ENCODE measurements at regions of chr14 and their contacts with region 1.

Region 1: DNA sequence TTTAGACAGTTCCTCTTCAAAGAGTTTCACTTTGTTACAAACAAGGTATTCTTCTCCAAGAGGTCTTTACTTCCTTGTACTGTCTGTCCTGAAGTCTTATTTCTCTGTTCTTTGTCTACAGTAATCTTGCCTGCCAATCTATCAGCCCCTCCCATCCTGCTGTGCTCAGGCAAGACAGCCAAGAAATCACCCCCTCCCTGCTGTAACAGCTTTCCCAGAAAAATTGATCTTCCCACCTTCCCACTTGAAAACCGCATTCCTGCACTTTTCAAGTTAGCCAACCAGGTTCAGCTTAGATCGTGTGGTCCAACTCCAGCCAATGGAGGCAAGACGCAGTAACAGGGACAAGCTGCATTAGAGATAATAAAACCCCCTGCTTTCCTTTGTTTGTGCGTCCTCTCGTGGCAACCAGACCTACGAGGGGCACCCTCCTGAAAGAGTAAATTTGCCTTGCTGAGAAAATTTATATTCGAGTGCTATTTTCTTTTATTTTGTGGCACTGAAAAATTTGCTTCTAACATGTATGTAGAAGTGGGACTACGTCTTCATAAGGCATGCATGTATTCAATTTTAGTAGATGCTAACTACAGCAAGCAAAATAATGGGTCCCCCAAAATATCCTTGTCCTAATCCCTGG is 46.5 kb upstream of the ESR2 start:
- DNase-seq: no peak
- H3K4me3 ChIP-seq: no peak overlapping the region
- H3K27ac ChIP-seq: no peak overlapping the region
- H3K4me1 ChIP-seq: no peaks in the 10 kb centered on the region
- H3K27me3 ChIP-seq: no peaks in the 10 kb centered on the region
- CTCF ChIP-seq: no peak
- EP300 ChIP-seq: no peak
- POLR2A ChIP-seq: no peak

Region 2: GRCh38 chr14:64478634-64479250 is 138.1 kb after region 1 on chr14:
- intact Hi-C with region 1: loop called in 2 of 4 experiments (anchors 10 kb)
- DNase-seq: no peak
- H3K4me3 ChIP-seq: no peak overlapping the region
- H3K27ac ChIP-seq: no peak overlapping the region
- H3K4me1 ChIP-seq: no peaks in the 10 kb centered on the region
- H3K27me3 ChIP-seq: no peaks in the 10 kb centered on the region
- CTCF ChIP-seq: peak in 1 of 3 donors; percentile 33
- EP300 ChIP-seq: no peak
- POLR2A ChIP-seq: no peak

Region 3: DNA sequence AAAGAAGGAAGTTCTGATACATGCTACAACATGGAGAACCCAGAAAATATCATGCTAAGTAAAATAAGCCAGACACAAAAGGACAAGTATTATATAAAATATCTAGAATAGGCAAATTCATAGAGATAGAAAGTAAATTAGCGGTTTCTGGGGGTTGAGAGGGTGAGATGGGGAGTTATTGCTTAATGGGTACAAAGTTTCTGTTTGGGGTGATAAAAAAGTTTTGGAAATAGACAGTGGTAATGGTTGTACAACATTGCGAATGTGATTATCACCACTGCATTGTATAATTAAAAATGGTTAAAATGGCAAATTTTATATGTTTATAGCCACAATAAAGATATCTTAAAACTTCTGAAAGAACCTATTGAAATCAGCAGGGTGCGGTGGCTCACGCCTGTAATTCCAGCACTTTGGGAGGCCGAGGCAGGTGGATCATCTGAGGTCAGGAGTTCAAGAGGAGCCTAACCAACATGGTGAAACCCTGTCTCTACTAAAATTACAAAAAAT is 148.0 kb after region 1 on chr14:
- intact Hi-C with region 1: loop called in 1 of 4 experiments (anchors 10 kb)
- DNase-seq: no peak
- H3K4me3 ChIP-seq: no peak overlapping the region
- H3K27ac ChIP-seq: no peak overlapping the region
- H3K4me1 ChIP-seq: no peaks in the 10 kb centered on the region
- H3K27me3 ChIP-seq: no peaks in the 10 kb centered on the region
- CTCF ChIP-seq: no peak
- EP300 ChIP-seq: no peak
- POLR2A ChIP-seq: no peak

Region 4: DNA sequence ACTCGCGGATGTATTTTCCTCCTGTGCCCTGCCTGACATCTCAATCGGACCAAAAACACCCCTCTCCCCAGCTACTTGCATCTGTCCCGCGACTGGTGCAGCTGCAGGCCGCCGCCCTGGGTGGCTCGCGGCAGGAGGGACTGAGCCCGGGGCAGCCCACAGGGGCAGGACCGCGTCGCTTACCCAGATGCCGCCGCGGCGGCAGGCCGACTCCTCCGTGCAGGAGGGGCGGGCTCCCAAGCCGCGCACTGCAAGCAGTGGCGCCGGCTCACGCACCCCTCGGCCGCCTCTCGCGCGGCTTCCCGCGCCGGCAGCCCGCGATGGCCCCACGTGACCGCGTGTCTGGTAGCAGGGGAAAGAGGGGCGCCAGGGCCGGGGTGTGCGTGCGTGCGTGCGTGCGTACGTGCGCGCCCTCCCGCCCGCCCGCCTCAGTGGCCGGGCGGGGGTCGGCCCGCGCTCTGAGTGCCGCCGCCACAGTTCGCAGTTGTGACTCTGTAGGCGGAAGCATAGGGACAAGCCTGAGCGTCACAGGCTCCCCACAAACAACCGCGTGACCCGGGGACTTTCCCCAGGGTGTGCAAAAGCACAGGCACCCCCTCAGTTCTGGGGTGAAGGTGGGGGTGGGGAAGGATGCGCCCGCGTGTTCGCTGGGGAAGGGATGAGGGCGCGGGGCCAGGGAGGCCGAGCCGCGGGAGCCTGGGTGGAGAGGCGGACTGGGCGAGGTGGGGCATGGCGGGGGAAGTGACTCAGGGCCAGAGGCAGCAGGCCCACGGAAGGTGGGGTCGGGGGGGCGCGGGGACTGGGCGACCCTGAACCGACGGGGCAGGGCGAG is 163.0 kb after region 1 on chr14 and contains the start of gene ZBTB25:
- intact Hi-C with region 1: loop called in 1 of 4 experiments (anchors 10 kb)
- DNase-seq: peak; percentile 88 to 94 (median 91)
- H3K4me3 ChIP-seq: peak within 1 kb of the TSS; percentile 89
- H3K27ac ChIP-seq: peak within 1 kb of the TSS; percentile 95 to 99
- H3K4me1 ChIP-seq: peaks cover 10% of the 10 kb centered on the region
- H3K27me3 ChIP-seq: no peaks in the 10 kb centered on the region
- CTCF ChIP-seq: no peak
- EP300 ChIP-seq: no peak
- POLR2A ChIP-seq: peak; percentile 78
- total RNA-seq, gene ZBTB25: 10.2 to 22.6 (median 13.9) TPM